HEK293 (cell line): ENCODE measurements at regions of chr12 and their contacts with region 1.

Region 1: GRCh38 chr12:51836041-51836826 is 12.3 kb downstream of the FIGNL2 start:
- H3K4me3 ChIP-seq: no peak overlapping the region
- H3K27ac ChIP-seq: no peak overlapping the region
- H3K4me1 ChIP-seq: 0 out of 2 replicates have a peak, but pooled peaks cover 3% of the 10 kb centered on the region
- CTCF ChIP-seq: no peak

Region 2: GRCh38 chr12:51823875-51824565 is 12.2 kb before region 1 on chr12:
- CTCF ChIA-PET with region 1: interaction called, 26 read pairs
- POLR2A ChIA-PET with region 1: interaction called, 6 read pairs
- H3K4me3 ChIP-seq: no peak overlapping the region
- H3K27ac ChIP-seq: no peak overlapping the region
- H3K4me1 ChIP-seq: no peaks in the 10 kb centered on the region
- CTCF ChIP-seq: peak; percentile 52; the same call in 1 of the 2 replicates